ENCODE measurements at regions of chr7 and their contacts with region 1.

Region 1: DNA sequence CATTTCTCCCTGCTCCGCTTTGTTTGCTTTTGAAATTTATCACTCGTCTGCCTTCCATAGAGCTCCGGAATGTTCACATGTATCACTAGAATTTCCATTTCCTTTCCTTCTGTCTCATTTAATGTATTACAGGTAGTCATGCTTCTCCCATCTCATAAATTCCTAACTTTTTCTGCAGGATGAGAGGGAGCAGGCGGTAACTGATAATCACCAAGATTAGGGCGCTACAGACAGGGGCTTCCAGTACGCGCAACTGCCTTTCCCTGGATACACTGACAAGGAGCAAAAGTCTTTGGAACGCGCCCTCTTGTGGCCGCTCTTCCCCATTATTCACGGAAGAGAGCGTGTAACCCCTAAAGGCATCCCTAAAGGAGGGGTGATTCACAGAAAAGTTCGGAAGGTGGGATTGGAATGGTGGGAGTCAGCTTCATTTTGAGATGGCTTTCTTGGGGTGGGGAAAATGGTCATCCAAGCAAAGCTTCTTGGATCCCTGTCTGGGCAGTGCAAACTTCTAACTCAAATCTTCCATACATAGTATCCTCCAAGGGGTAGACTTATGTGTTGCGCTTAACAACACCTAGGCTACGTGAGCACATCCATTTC is 6.5 kb downstream of the INHBA start:
- DNase-seq: peak; percentile 88
- ATAC-seq: peak; percentile 42
- H3K4me3 ChIP-seq: peak overlapping the region; percentile 91
- H3K27ac ChIP-seq: peak overlapping the region; percentile 91
- H3K4me1 ChIP-seq: peaks cover 27% of the 10 kb centered on the region
- H3K27me3 ChIP-seq: no peaks in the 10 kb centered on the region
- CTCF ChIP-seq: peak; percentile 72
- POLR2A ChIP-seq: peak; percentile 17; the same call in 1 of the 2 replicates
- RAD21 ChIP-seq: peak; percentile 73

Region 2: DNA sequence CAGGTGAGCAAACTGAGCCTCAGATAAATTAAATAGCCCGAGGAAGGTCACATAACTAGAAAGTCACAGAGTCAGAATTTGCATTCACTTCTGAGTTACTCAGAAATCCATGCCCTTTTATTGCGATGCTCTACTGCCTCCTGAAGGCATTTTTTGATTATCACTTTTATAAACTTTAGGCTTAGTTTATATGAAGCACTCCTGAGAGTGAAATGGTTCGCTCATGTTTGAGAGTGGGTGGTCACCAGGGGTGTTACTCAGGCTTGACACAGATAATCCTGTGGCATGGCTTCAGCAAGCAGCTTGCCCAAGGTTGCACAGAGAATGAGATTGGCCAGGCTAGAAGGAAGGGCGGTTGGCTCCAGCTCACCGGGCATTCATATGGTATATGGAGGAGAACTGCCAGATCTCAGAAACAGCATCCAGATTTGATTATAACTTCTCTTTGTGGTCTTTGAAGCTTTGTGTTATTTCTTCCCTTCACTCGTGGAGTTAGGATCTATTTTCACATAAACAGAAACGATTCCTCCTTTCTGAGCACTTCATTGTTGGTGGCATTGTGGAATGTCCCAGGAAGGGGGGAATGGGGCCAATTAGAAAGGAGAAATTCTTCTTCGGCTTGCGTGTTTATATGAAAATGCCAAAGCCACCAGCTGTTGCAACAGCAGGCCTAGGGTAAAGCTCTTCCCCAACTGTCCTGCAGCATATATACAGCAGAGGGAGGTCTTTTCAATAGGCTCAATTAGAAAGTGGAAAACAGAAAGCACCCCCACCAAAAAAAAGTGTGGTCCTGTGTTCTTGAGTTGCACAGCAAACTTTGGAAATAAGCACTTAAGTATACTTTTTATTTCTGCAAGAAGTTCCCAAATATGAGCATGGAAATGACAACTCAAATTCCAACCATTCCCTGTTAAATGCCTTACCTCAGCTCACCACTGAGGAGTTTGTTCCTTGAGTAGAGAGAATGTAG is 932.8 kb before region 1 on chr7:
- CTCF ChIA-PET with region 1: interaction called, 3 read pairs
- POLR2A ChIA-PET with region 1: no interaction called
- dilution Hi-C with region 1: no loop called
- in situ Hi-C with region 1: loop called (anchors 10 kb)
- intact Hi-C with region 1: loop called (anchors 2 kb)
- DNase-seq: peak; percentile 86
- ATAC-seq: peak; percentile 87
- H3K4me3 ChIP-seq: peak overlapping the region; percentile 34; the same call in 1 of the 2 replicates
- H3K27ac ChIP-seq: peak overlapping the region; percentile 91
- H3K4me1 ChIP-seq: peaks cover 6% of the 10 kb centered on the region
- H3K27me3 ChIP-seq: no peaks in the 10 kb centered on the region
- CTCF ChIP-seq: peak; percentile 60
- POLR2A ChIP-seq: no peak
- RAD21 ChIP-seq: peak; percentile 78

Region 3: GRCh38 chr7:41010418-41010817 is 686.0 kb before region 1 on chr7:
- CTCF ChIA-PET with region 1: no interaction called
- POLR2A ChIA-PET with region 1: no interaction called
- dilution Hi-C with region 1: no loop called
- in situ Hi-C with region 1: no loop called
- intact Hi-C with region 1: loop called (anchors 5 kb)
- DNase-seq: peak; percentile 10
- ATAC-seq: peak; percentile 54
- H3K4me3 ChIP-seq: no peak overlapping the region
- H3K27ac ChIP-seq: 0 out of 2 replicates have a peak overlapping the region, but pooled peaks have one; percentile 34
- H3K4me1 ChIP-seq: peaks cover 13% of the 10 kb centered on the region
- H3K27me3 ChIP-seq: no peaks in the 10 kb centered on the region
- CTCF ChIP-seq: no peak
- POLR2A ChIP-seq: no peak
- RAD21 ChIP-seq: no peak

Region 4: DNA sequence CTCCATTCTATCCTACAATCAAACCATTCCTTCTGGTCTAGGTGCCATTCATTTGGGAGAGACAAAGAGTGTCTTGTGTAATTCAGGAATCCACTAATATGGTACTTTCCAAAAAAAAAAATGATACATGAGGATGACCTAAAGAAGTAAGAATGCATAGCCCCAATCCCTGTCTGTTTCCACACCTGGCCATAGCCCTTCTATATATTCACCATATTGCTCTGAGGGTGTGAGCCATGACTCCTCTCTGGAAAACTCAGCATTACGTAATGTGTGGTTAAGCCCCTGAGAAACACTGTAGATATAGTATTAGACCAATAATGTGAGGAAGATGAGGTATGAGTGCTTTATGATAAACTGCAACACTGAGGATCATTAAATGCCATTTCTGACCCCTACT is 586.2 kb before region 1 on chr7:
- CTCF ChIA-PET with region 1: no interaction called
- POLR2A ChIA-PET with region 1: no interaction called
- dilution Hi-C with region 1: no loop called
- in situ Hi-C with region 1: no loop called
- intact Hi-C with region 1: loop called (anchors 5 kb)
- DNase-seq: peak; percentile 78
- ATAC-seq: no peak
- H3K4me3 ChIP-seq: no peak overlapping the region
- H3K27ac ChIP-seq: no peak overlapping the region
- H3K4me1 ChIP-seq: peaks cover 8% of the 10 kb centered on the region
- H3K27me3 ChIP-seq: no peaks in the 10 kb centered on the region
- CTCF ChIP-seq: no peak
- POLR2A ChIP-seq: no peak
- RAD21 ChIP-seq: no peak

Region 5: GRCh38 chr7:41333511-41333910 is 362.9 kb before region 1 on chr7:
- CTCF ChIA-PET with region 1: no interaction called
- POLR2A ChIA-PET with region 1: no interaction called
- dilution Hi-C with region 1: no loop called
- in situ Hi-C with region 1: no loop called
- intact Hi-C with region 1: loop called (anchors 10 kb)
- DNase-seq: peak; percentile 87
- ATAC-seq: peak; percentile 54
- H3K4me3 ChIP-seq: no peak overlapping the region
- H3K27ac ChIP-seq: no peak overlapping the region
- H3K4me1 ChIP-seq: peaks cover 7% of the 10 kb centered on the region
- H3K27me3 ChIP-seq: no peaks in the 10 kb centered on the region
- CTCF ChIP-seq: no peak
- POLR2A ChIP-seq: no peak
- RAD21 ChIP-seq: no peak

Region 6: GRCh38 chr7:41491883-41492471 is 204.4 kb before region 1 on chr7:
- CTCF ChIA-PET with region 1: no interaction called
- POLR2A ChIA-PET with region 1: no interaction called
- dilution Hi-C with region 1: no loop called
- in situ Hi-C with region 1: no loop called
- intact Hi-C with region 1: loop called (anchors 5 kb)
- DNase-seq: peak; percentile 63
- ATAC-seq: peak; percentile 77
- H3K4me3 ChIP-seq: no peak overlapping the region
- H3K27ac ChIP-seq: peak overlapping the region; percentile 19; the same call in 1 of the 2 replicates
- H3K4me1 ChIP-seq: peaks cover 14% of the 10 kb centered on the region
- H3K27me3 ChIP-seq: no peaks in the 10 kb centered on the region
- CTCF ChIP-seq: no peak
- POLR2A ChIP-seq: no peak
- RAD21 ChIP-seq: no peak

Region 7: DNA sequence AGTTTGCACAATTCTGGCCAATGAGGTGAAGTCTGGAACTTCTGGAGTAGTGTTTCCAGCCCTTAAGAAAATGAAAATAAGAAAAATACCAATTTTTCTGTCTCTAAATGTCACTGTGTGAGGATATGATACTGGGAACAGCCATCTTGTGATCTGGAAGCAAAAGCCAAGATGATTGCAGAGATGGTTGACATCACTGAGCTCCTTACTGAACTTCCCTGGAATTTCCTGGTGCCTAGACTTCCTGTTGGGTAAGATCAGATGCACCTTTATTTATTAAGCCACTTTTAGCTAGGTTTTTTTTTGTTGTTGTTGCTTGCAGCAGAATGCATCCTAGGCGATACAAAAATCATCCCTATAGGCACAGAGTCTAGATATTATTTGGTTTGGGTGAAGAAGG is 33.7 kb after region 1 on chr7:
- CTCF ChIA-PET with region 1: no interaction called
- POLR2A ChIA-PET with region 1: no interaction called
- dilution Hi-C with region 1: no loop called
- in situ Hi-C with region 1: no loop called
- intact Hi-C with region 1: no loop called
- DNase-seq: peak; percentile 31
- ATAC-seq: no peak
- H3K4me3 ChIP-seq: no peak overlapping the region
- H3K27ac ChIP-seq: no peak overlapping the region
- H3K4me1 ChIP-seq: peaks cover 2% of the 10 kb centered on the region
- H3K27me3 ChIP-seq: no peaks in the 10 kb centered on the region
- CTCF ChIP-seq: no peak
- POLR2A ChIP-seq: no peak
- RAD21 ChIP-seq: no peak

Region 8: DNA sequence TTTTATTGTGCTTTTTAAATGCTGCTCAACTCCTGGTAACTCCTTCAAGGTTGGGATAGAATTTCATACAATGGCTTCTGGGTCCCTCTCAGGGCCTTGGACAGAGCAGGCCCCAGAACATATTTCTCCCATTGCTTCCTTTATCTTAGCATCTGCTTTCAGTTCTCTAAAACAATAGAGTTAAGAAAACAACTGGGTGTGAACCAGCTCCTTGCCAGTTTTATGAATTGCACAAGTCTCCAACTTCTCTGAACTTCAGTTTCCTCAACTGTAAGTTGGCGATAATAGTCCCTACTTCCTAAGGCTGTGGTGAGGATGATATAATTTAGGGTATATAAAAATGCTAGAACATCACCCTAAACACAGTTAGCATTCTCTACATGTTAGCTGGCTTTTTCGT is 83.5 kb after region 1 on chr7:
- CTCF ChIA-PET with region 1: no interaction called
- POLR2A ChIA-PET with region 1: no interaction called
- dilution Hi-C with region 1: no loop called
- in situ Hi-C with region 1: no loop called
- intact Hi-C with region 1: no loop called
- DNase-seq: no peak
- ATAC-seq: no peak
- H3K4me3 ChIP-seq: no peak overlapping the region
- H3K27ac ChIP-seq: no peak overlapping the region
- H3K4me1 ChIP-seq: peaks cover 3% of the 10 kb centered on the region; the same call in 1 of the 2 replicates
- H3K27me3 ChIP-seq: no peaks in the 10 kb centered on the region
- CTCF ChIP-seq: no peak
- POLR2A ChIP-seq: no peak
- RAD21 ChIP-seq: no peak

Region 9: GRCh38 chr7:42237162-42237821 is 540.9 kb after region 1 on chr7 and contains the start of gene GLI3:
- CTCF ChIA-PET with region 1: no interaction called
- POLR2A ChIA-PET with region 1: no interaction called
- dilution Hi-C with region 1: no loop called
- in situ Hi-C with region 1: no loop called
- intact Hi-C with region 1: no loop called
- DNase-seq: peak; percentile 93
- ATAC-seq: peak; percentile 65
- H3K4me3 ChIP-seq: peak within 1 kb of the TSS; percentile 55
- H3K27ac ChIP-seq: peak within 1 kb of the TSS; percentile 90
- H3K4me1 ChIP-seq: peaks cover 9% of the 10 kb centered on the region
- H3K27me3 ChIP-seq: no peaks in the 10 kb centered on the region
- CTCF ChIP-seq: peak; percentile 36; the same call in 1 of the 2 replicates
- POLR2A ChIP-seq: peak; percentile 47
- RAD21 ChIP-seq: no peak
- total RNA-seq, gene GLI3: 1.3 and 1.7 TPM in 2 replicates